CD4-positive, alpha-beta T cell (primary cell): ENCODE measurements at regions of chr4 and their contacts with region 1.

Region 1: GRCh38 chr4:2418650-2419571 is at the start of gene CFAP99:
- DNase-seq: peak; percentile 98 to 99 (median 99)
- ATAC-seq: peak; percentile 86
- H3K4me3 ChIP-seq: peak within 1 kb of the TSS; percentile 75
- H3K4me3 Mint-ChIP-seq: peak within 1 kb of the TSS; percentile 91
- H3K27ac ChIP-seq: peak within 1 kb of the TSS; percentile 43 to 88
- H3K27ac Mint-ChIP-seq: peak within 1 kb of the TSS; percentile 80
- H3K4me1 ChIP-seq: peaks cover 49% of the 10 kb centered on the region
- H3K4me1 Mint-ChIP-seq: peaks cover 39% of the 10 kb centered on the region
- H3K27me3 ChIP-seq: peaks cover 9 to 11% of the 10 kb centered on the region in 2 experiments
- H3K27me3 Mint-ChIP-seq: peaks cover 31% of the 10 kb centered on the region
- CTCF ChIP-seq: peak; percentile 52
- total RNA-seq, gene CFAP99: 0.17 TPM in 1 of 2 experiments, not detected in the other

Region 2: DNA sequence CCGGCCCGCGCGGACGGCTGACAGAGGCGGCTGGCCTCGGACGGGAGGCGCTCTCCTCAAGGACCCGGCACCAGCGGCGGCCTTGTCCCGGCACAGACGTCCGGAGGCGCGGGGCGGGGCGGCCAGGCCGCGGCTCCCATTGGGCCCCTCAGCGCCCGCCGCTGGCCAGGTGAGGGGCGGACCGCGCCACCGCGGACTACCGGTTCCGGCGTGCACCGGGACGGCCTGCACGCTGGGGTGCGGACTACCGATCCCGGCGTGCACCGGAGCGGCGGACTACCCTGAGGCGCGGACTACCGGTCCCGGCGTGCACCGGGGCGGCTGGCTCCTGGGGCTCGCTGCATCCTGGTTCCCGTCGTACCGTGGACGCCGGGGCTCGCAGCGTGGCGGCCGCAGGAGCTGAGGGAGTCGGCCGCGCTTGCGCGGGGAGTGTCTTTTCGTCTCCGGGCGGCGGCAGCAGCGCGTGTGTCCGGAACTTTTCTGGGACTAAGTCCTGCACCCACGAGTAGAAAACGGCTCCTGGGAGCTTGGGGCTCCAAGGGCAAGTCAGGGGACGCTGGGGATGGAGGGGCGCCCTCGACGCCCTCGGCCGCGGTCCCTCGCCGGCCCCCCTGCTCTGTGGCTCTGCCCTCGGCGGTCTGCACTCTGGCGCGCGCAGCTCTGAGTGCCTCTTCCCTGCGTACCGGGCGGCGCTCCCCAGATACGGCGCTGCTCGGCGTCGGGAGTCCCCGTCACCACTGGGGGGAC is 562.7 kb before region 1 on chr4 and contains the start of gene LETM1:
- CTCF ChIA-PET with region 1: interaction called, 3 read pairs
- POLR2A ChIA-PET with region 1: no interaction called
- intact Hi-C with region 1: loop called in 1 of 2 experiments (anchors 5 kb)
- DNase-seq: peak; percentile 81 to 97 (median 91)
- ATAC-seq: peak; percentile 97
- H3K4me3 ChIP-seq: peak within 1 kb of the TSS; percentile 75
- H3K4me3 Mint-ChIP-seq: peak within 1 kb of the TSS; percentile 94
- H3K27ac ChIP-seq: peak within 1 kb of the TSS in 1 of 2 donors; percentile 5
- H3K27ac Mint-ChIP-seq: peak within 1 kb of the TSS; percentile 76
- H3K4me1 ChIP-seq: peaks cover 32% of the 10 kb centered on the region
- H3K4me1 Mint-ChIP-seq: peaks cover 40% of the 10 kb centered on the region
- H3K27me3 ChIP-seq: no peaks in the 10 kb centered on the region
- H3K27me3 Mint-ChIP-seq: no peaks in the 10 kb centered on the region
- CTCF ChIP-seq: no peak
- total RNA-seq, gene LETM1: 21.2 to 25.2 TPM

Region 3: GRCh38 chr4:2262143-2262943 is 156.6 kb before region 1 on chr4:
- CTCF ChIA-PET with region 1: interaction called, 17 read pairs
- POLR2A ChIA-PET with region 1: interaction called, 45 read pairs
- intact Hi-C with region 1: no loop called
- DNase-seq: peak; percentile 92 to 99 (median 97)
- ATAC-seq: peak; percentile 89
- H3K4me3 ChIP-seq: peak overlapping the region; percentile 64
- H3K4me3 Mint-ChIP-seq: peak overlapping the region; percentile 96
- H3K27ac ChIP-seq: peak overlapping the region; percentile 84 to 93
- H3K27ac Mint-ChIP-seq: peak overlapping the region; percentile 95
- H3K4me1 ChIP-seq: peaks cover 51% of the 10 kb centered on the region
- H3K4me1 Mint-ChIP-seq: no peaks in the 10 kb centered on the region
- H3K27me3 ChIP-seq: no peaks in the 10 kb centered on the region
- H3K27me3 Mint-ChIP-seq: no peaks in the 10 kb centered on the region
- CTCF ChIP-seq: no peak

Region 4: GRCh38 chr4:2375427-2375826 is 43.5 kb before region 1 on chr4:
- CTCF ChIA-PET with region 1: no interaction called
- POLR2A ChIA-PET with region 1: no interaction called
- intact Hi-C with region 1: no loop called
- DNase-seq: no peak
- ATAC-seq: no peak
- H3K4me3 ChIP-seq: no peak overlapping the region
- H3K4me3 Mint-ChIP-seq: no peak overlapping the region
- H3K27ac ChIP-seq: no peak overlapping the region
- H3K27ac Mint-ChIP-seq: no peak overlapping the region
- H3K4me1 ChIP-seq: no peaks in the 10 kb centered on the region
- H3K4me1 Mint-ChIP-seq: no peaks in the 10 kb centered on the region
- H3K27me3 ChIP-seq: no peaks in the 10 kb centered on the region
- H3K27me3 Mint-ChIP-seq: no peaks in the 10 kb centered on the region
- CTCF ChIP-seq: no peak

Region 5: GRCh38 chr4:2393353-2394270 is 25.3 kb before region 1 on chr4:
- CTCF ChIA-PET with region 1: interaction called, 12 read pairs
- POLR2A ChIA-PET with region 1: interaction called, 5 read pairs
- intact Hi-C with region 1: no loop called
- DNase-seq: peak in 4 of 14 experiments; percentile 13 to 32 (median 21)
- ATAC-seq: peak; percentile 50
- H3K4me3 ChIP-seq: no peak overlapping the region
- H3K4me3 Mint-ChIP-seq: peak overlapping the region; percentile 18
- H3K27ac ChIP-seq: no peak overlapping the region
- H3K27ac Mint-ChIP-seq: peak overlapping the region; percentile 15
- H3K4me1 ChIP-seq: peaks cover 42% of the 10 kb centered on the region
- H3K4me1 Mint-ChIP-seq: peaks cover 44% of the 10 kb centered on the region
- H3K27me3 ChIP-seq: peaks cover 0 to 2% of the 10 kb centered on the region in 2 experiments
- H3K27me3 Mint-ChIP-seq: peaks cover 14% of the 10 kb centered on the region
- CTCF ChIP-seq: no peak

Region 6: DNA sequence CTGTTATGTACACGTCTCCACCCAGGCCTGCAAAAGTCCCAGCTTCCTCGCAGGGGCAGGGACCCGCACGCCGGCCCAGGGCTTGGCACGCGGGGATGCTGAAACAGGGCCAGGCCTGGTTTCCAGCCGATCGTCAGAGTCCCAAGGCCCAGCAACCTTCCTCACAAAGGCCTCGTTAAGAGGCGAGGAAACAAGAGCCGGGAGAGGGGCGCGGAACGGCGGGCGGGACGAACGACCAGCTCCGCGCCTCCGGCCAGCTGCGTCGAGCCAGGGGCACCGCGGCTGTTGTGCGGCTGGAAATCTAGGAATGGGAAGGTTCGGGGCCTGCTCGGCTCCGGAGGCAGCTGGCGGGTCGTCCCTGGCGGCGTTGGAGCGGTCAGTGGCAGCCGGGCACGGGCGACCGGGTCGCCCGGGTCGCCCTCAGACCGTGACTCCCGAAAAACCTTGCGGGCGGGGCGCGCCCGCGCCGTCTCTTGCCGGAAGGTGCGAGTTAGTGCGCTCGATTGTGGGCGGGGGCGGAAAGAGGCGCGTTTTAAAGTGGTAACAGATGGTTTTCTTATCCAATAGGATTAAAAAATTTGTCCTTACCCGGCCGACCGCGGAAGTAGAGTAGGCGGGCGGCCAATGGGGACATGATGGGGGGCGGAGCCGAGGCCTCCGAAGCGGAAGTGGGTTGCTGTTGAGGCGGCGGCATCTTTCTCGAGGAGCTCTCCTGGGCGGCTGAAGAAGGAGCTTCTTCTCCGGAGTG is 49.7 kb after region 1 on chr4 and contains the start of gene RNF4:
- CTCF ChIA-PET with region 1: interaction called, 13 read pairs
- POLR2A ChIA-PET with region 1: interaction called, 26 read pairs
- intact Hi-C with region 1: loop called in 1 of 2 experiments (anchors 2 kb)
- DNase-seq: peak; percentile 89 to 98 (median 94)
- ATAC-seq: peak; percentile 84
- H3K4me3 ChIP-seq: peak within 1 kb of the TSS; percentile 98
- H3K4me3 Mint-ChIP-seq: peak within 1 kb of the TSS; percentile 94
- H3K27ac ChIP-seq: peak within 1 kb of the TSS; percentile 96 to 97
- H3K27ac Mint-ChIP-seq: peak within 1 kb of the TSS; percentile 94
- H3K4me1 ChIP-seq: peaks cover 48% of the 10 kb centered on the region
- H3K4me1 Mint-ChIP-seq: peaks cover 48% of the 10 kb centered on the region
- H3K27me3 ChIP-seq: no peaks in the 10 kb centered on the region
- H3K27me3 Mint-ChIP-seq: no peaks in the 10 kb centered on the region
- CTCF ChIP-seq: no peak
- total RNA-seq, gene RNF4: 106 to 109 TPM

Region 7: GRCh38 chr4:2963175-2963965 is 544.5 kb after region 1 on chr4 and contains the starts of genes GRK4 and NOP14:
- CTCF ChIA-PET with region 1: no interaction called
- POLR2A ChIA-PET with region 1: interaction called, 3 read pairs
- intact Hi-C with region 1: loop called in 1 of 2 experiments (anchors 1 kb)
- DNase-seq: peak; percentile 92 to 99 (median 96)
- ATAC-seq: peak; percentile 89
- H3K4me3 ChIP-seq: peak within 1 kb of the TSS; percentile 87
- H3K4me3 Mint-ChIP-seq: peak within 1 kb of the TSS; percentile 92
- H3K27ac ChIP-seq: peak within 1 kb of the TSS; percentile 88 to 92
- H3K27ac Mint-ChIP-seq: peak within 1 kb of the TSS; percentile 84
- H3K4me1 ChIP-seq: peaks cover 34% of the 10 kb centered on the region
- H3K4me1 Mint-ChIP-seq: peaks cover 42% of the 10 kb centered on the region
- H3K27me3 ChIP-seq: no peaks in the 10 kb centered on the region
- H3K27me3 Mint-ChIP-seq: no peaks in the 10 kb centered on the region
- CTCF ChIP-seq: peak; percentile 62
- total RNA-seq, gene GRK4: 1.2 to 1.8 TPM
- total RNA-seq, gene NOP14: 21.8 TPM